Endothelial cell of umbilical vein (primary cell): ENCODE measurements at regions of chr9 and their contacts with region 1.

Region 1: GRCh38 chr9:132582276-132582785 is at the start of gene BARHL1:
- DNase-seq: no peak
- H3K4me3 ChIP-seq: no peak within 1 kb of the TSS
- H3K27ac ChIP-seq: no peak within 1 kb of the TSS
- H3K4me1 ChIP-seq: peaks cover 11% of the 10 kb centered on the region
- H3K27me3 ChIP-seq: peaks cover 84 to 96% of the 10 kb centered on the region in 2 experiments
- CTCF ChIP-seq: no peak
- POLR2A ChIP-seq: no peak
- total RNA-seq, gene BARHL1: not detected in 2 replicates

Region 2: DNA sequence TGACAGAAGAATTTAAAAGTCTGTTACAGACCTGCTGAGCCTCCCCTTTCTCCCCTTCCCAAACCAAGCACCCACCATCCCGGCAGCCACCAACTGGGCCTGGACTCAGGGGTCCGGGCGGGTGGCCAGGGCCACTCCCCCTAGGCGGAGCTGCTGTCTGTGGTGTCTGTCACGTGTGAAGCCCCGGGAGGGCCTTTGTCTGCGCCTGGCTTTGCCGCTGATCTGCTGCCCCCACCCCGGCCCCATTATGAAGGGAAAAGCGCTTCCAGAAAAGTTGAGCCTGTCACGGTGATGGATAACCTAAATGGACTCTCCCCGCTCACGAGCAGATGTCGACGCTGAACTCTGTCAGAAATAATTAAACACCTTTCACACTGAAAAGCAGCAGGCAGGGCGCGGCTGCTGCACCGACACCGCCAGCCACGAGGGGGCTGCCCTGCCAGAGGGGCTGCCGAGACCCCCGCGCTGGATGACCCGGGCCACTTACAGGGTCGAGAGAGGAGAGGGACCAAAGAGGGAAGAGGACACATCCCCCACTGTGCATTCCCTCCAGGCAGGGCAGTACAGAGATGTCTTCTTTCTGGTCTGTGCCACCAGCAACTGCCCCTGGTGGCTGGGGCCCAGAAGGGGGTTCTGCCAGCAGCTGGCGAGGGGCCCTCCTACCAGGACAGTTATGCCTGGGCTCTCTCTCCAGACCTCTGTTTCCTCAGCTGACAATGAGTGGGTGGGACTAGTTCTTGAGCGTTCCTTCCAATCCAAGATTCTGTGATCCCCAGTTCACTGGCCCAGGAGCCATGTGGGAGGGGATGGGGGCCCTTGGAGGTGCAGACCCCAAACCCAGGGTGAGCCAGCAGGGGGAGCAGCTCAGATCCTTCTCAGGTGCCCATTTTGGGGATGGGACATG is 35.9 kb before region 1 on chr9:
- CTCF ChIA-PET with region 1: no interaction called
- POLR2A ChIA-PET with region 1: no interaction called
- dilution Hi-C with region 1: no loop called
- intact Hi-C with region 1: loop called (anchors 2 kb)
- DNase-seq: peak; percentile 32
- H3K4me3 ChIP-seq: peak overlapping the region in 1 of 3 experiments; percentile 9
- H3K27ac ChIP-seq: no peak overlapping the region
- H3K4me1 ChIP-seq: peaks cover 14% of the 10 kb centered on the region
- H3K27me3 ChIP-seq: peaks cover 0 to 3% of the 10 kb centered on the region in 2 experiments
- CTCF ChIP-seq: peak; percentile 44 to 64
- POLR2A ChIP-seq: no peak

Region 3: DNA sequence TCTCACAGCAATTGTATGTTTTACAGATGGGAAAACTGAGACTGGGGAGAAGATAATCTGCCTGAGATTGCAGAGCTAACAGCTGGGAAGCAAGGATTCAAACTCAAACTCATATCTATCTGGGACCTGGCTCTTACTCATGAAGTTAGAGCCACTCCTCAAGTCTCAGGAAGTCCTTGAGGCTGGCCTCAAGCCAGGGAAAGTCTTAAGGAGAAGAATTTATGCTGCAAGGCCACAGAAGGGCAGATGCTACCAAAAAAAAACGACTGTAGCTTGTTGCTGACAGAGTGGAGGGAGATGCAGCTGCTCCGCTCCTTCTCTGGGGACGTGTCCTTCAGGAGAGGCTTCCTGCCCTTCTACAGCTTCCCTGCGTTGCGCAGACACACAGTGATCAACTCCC is 39.8 kb after region 1 on chr9:
- CTCF ChIA-PET with region 1: no interaction called
- POLR2A ChIA-PET with region 1: no interaction called
- dilution Hi-C with region 1: no loop called
- intact Hi-C with region 1: no loop called
- DNase-seq: no peak
- H3K4me3 ChIP-seq: no peak overlapping the region
- H3K27ac ChIP-seq: no peak overlapping the region
- H3K4me1 ChIP-seq: no peaks in the 10 kb centered on the region
- H3K27me3 ChIP-seq: no peaks in the 10 kb centered on the region
- CTCF ChIP-seq: no peak
- POLR2A ChIP-seq: no peak